ENCODE measurements at regions of chr12 and their contacts with region 1.

Region 1: GRCh38 chr12:111029732-111030131 is 109.4 kb upstream of the MYL2 start:
- DNase-seq: no peak
- H3K4me3 ChIP-seq: no peak overlapping the region
- H3K27ac ChIP-seq: no peak overlapping the region
- H3K4me1 ChIP-seq: peaks cover 0 to 5% of the 10 kb centered on the region in 2 donors
- H3K27me3 ChIP-seq: peaks cover 6 to 70% of the 10 kb centered on the region in 2 donors
- CTCF ChIP-seq: no peak
- POLR2A ChIP-seq: no peak

Region 2: GRCh38 chr12:110957652-110958051 is 72.1 kb before region 1 on chr12:
- intact Hi-C with region 1: no loop called
- DNase-seq: no peak
- H3K4me3 ChIP-seq: no peak overlapping the region
- H3K27ac ChIP-seq: no peak overlapping the region
- H3K4me1 ChIP-seq: no peaks in the 10 kb centered on the region
- H3K27me3 ChIP-seq: peaks cover 0 to 9% of the 10 kb centered on the region in 2 donors
- CTCF ChIP-seq: no peak
- POLR2A ChIP-seq: no peak

Region 3: DNA sequence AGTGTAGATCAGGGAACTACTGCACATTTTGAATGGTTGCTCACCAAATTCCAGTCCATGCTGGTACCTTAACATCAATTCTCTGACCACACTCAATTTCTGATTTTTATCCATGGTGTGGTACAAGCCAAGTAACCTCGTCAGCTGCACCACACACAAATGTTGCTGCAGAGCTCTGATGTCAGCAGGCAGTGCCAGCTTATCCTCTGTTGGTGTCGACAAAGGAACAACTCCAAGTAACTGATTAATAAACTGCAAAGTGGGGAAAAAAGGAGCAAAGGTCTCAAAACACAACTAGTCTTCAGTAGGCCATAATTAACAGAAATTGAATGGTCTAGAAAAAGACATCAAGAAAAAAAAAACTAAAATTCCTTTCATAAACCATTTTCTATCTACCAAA is 1031.4 kb after region 1 on chr12:
- intact Hi-C with region 1: no loop called
- DNase-seq: no peak
- H3K4me3 ChIP-seq: no peak overlapping the region
- H3K27ac ChIP-seq: no peak overlapping the region
- H3K4me1 ChIP-seq: no peaks in the 10 kb centered on the region
- H3K27me3 ChIP-seq: no peaks in the 10 kb centered on the region
- CTCF ChIP-seq: no peak
- POLR2A ChIP-seq: no peak

Region 4: DNA sequence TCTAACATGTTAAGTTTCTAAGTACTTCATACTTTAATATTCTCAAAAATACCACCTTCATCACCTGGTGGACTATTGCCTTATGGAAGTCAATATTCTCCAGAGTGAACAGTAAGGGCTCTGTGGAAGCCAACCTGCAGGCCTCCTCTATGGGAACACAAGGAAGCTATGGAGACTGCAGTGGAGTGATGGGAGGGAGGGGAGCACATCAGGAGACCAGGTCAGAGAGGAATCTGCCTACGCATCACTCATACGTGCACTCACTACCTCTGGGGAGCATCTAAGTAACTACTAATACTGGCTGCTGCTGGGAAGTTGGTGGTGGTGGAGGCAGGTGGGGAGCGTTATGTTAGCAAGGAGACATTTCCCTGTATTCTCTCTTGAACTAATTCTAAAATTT is 1332.6 kb after region 1 on chr12:
- intact Hi-C with region 1: loop called (anchors 5 kb)
- DNase-seq: no peak
- H3K4me3 ChIP-seq: no peak overlapping the region
- H3K27ac ChIP-seq: no peak overlapping the region
- H3K4me1 ChIP-seq: no peaks in the 10 kb centered on the region
- H3K27me3 ChIP-seq: no peaks in the 10 kb centered on the region
- CTCF ChIP-seq: no peak
- POLR2A ChIP-seq: no peak